Caco-2 (cell line): ENCODE measurements at regions of chr5 and their contacts with region 1.

Region 1: DNA sequence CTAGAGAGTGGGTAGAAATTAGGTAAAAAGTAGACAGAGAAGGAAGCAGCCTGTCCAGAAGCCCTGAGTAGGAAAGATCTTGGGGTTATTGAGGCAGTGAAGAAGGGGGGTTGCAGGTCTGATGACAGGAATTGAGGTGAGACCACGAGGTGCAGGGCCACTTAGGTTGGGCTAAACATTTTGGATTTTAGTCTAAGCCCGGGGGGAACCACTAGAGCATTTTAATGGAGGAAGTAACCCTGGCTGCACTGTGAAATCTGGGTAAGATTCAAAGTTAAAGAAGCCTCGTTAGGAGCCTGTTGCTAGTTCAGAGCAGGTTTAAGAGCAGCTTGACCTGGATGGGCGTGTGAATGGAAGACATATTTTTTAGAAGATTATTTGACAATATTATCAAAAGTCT is 38.3 kb downstream of the MAP3K1 start:
- DNase-seq: no peak
- H3K4me3 ChIP-seq: no peak overlapping the region
- H3K4me3 Mint-ChIP-seq: no peak overlapping the region
- H3K27ac Mint-ChIP-seq: peak overlapping the region; percentile 5
- H3K4me1 ChIP-seq: peaks cover 37% of the 10 kb centered on the region
- H3K4me1 Mint-ChIP-seq: peaks cover 33% of the 10 kb centered on the region
- H3K27me3 ChIP-seq: no peaks in the 10 kb centered on the region
- H3K27me3 Mint-ChIP-seq: no peaks in the 10 kb centered on the region
- CTCF ChIP-seq: no peak

Region 2: DNA sequence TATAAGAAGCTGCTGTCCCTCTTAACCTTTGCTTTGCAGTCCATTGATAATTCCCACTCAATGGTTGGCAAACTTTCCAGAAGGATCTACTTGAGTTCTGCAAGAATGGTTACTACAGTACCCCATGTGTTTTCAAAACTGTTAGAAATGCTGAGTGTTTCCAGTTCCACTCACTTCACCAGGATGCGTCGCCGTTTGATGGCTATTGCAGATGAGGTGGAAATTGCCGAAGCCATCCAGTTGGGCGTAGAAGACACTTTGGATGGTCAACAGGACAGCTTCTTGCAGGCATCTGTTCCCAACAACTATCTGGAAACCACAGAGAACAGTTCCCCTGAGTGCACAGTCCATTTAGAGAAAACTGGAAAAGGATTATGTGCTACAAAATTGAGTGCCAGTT is 27.9 kb after region 1 on chr5:
- CTCF ChIA-PET with region 1: no interaction called
- POLR2A ChIA-PET with region 1: no interaction called
- intact Hi-C with region 1: loop called (anchors 2 kb)
- DNase-seq: no peak
- H3K4me3 ChIP-seq: no peak overlapping the region
- H3K4me3 Mint-ChIP-seq: no peak overlapping the region
- H3K27ac Mint-ChIP-seq: no peak overlapping the region
- H3K4me1 ChIP-seq: no peaks in the 10 kb centered on the region
- H3K4me1 Mint-ChIP-seq: no peaks in the 10 kb centered on the region
- H3K27me3 ChIP-seq: no peaks in the 10 kb centered on the region
- H3K27me3 Mint-ChIP-seq: no peaks in the 10 kb centered on the region
- CTCF ChIP-seq: no peak